Activated naive CD4-positive, alpha-beta T cell treated with anti-CD3 and anti-CD28 coated beads for 36 hours (primary cell): ENCODE measurements at regions of chr15 and their contacts with region 1.

Region 1: DNA sequence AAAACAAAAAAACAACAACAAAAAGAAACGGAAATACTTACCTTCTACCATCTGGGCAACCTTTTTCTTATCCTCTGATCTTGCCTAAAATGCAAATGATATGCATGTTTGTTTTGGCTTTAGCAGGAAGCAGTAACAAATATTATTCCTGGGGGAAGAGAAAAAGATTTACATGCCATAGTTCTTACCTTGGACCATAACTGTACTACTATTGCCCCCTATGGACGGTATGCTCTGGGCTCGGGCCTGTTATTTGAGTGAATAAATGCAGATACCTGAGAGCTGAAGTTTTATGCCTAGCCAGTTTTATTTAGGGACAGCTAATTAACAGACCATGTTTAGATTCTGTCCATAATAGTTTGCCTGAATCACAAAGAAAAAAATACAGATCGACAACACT is 12.6 kb upstream of the STARD5 start:
- DNase-seq: peak; percentile 69
- H3K4me3 Mint-ChIP-seq: no peak overlapping the region
- H3K27ac Mint-ChIP-seq: no peak overlapping the region
- H3K4me1 Mint-ChIP-seq: peaks cover 15% of the 10 kb centered on the region
- H3K27me3 Mint-ChIP-seq: no peaks in the 10 kb centered on the region

Region 2: GRCh38 chr15:81106560-81106959 is 230.0 kb before region 1 on chr15:
- CTCF ChIA-PET with region 1: no interaction called
- intact Hi-C with region 1: loop called (anchors 5 kb)
- DNase-seq: peak; percentile 55
- H3K4me3 Mint-ChIP-seq: no peak overlapping the region
- H3K27ac Mint-ChIP-seq: no peak overlapping the region
- H3K4me1 Mint-ChIP-seq: peaks cover 1% of the 10 kb centered on the region
- H3K27me3 Mint-ChIP-seq: peaks cover 8% of the 10 kb centered on the region

Region 3: GRCh38 chr15:81155375-81156218 is 181.0 kb before region 1 on chr15:
- CTCF ChIA-PET with region 1: interaction called, 3 read pairs
- intact Hi-C with region 1: loop called (anchors 5 kb)
- DNase-seq: peak; percentile 35
- H3K4me3 Mint-ChIP-seq: no peak overlapping the region
- H3K27ac Mint-ChIP-seq: no peak overlapping the region
- H3K4me1 Mint-ChIP-seq: peaks cover under 1% of the 10 kb centered on the region
- H3K27me3 Mint-ChIP-seq: no peaks in the 10 kb centered on the region

Region 4: DNA sequence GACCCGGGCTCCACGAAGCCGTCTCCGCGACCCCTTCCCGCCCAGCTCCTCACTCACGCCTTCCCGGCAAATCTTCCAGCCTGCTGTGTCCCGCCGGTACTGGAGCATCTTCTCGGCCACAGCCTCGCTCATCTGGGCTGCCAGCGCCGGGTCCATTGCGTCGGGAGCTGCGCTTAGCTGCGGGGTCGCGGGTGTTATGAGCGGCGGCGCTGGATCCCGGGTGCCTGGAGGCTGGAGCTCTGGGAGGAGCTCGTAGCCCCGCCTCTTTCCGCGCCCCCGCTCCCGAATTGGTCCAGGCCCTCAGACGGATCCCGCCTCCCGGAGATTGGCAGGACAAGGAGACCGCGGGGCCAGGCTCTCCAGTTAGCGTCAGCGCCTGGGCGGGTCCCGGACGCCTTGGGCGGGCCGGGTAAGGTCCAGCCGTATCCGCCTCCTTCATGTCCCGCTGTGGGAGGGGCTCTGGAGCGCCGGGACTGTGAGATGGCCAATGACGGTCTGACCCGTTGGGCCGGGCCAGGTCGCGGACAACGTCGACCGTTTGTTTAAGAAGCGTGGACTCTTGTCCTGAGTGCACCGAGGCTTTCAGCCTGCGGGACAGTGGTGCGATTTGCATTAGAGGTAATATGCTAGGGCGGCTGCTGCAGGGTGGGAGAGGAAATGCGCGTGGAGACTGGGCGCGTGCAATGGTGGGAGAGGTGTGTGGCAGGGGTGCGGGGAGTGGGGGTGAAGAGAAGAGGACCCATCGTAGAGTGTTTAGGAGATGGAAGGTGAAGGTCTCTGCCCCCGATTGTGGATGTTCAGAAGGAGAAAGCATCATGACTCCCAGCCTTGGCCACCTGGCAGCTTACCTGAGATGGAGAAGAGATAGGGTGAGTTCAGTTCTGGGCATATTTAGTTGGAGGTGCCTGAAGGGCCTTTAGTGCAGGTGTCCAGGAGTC is 12.4 kb before region 1 on chr15 and contains the start of gene STARD5:
- CTCF ChIA-PET with region 1: interaction called, 14 read pairs
- intact Hi-C with region 1: no loop called
- DNase-seq: peak; percentile 98
- H3K4me3 Mint-ChIP-seq: peak within 1 kb of the TSS; percentile 98
- H3K27ac Mint-ChIP-seq: peak within 1 kb of the TSS; percentile 78
- H3K4me1 Mint-ChIP-seq: peaks cover 38% of the 10 kb centered on the region
- H3K27me3 Mint-ChIP-seq: no peaks in the 10 kb centered on the region
- total RNA-seq, gene STARD5: 10.1 to 11.7 TPM

Region 5: GRCh38 chr15:81363718-81364500 is 27.3 kb after region 1 on chr15:
- CTCF ChIA-PET with region 1: no interaction called
- intact Hi-C with region 1: no loop called
- DNase-seq: no peak
- H3K4me3 Mint-ChIP-seq: no peak overlapping the region
- H3K27ac Mint-ChIP-seq: no peak overlapping the region
- H3K4me1 Mint-ChIP-seq: no peaks in the 10 kb centered on the region
- H3K27me3 Mint-ChIP-seq: no peaks in the 10 kb centered on the region

Region 6: GRCh38 chr15:81400640-81401236 is 64.2 kb after region 1 on chr15:
- CTCF ChIA-PET with region 1: interaction called, 4 read pairs
- intact Hi-C with region 1: loop called (anchors 1 kb)
- DNase-seq: no peak
- H3K4me3 Mint-ChIP-seq: no peak overlapping the region
- H3K27ac Mint-ChIP-seq: no peak overlapping the region
- H3K4me1 Mint-ChIP-seq: no peaks in the 10 kb centered on the region
- H3K27me3 Mint-ChIP-seq: no peaks in the 10 kb centered on the region

Region 7: GRCh38 chr15:81529481-81529880 is 192.9 kb after region 1 on chr15:
- CTCF ChIA-PET with region 1: no interaction called
- intact Hi-C with region 1: no loop called
- DNase-seq: no peak
- H3K4me3 Mint-ChIP-seq: no peak overlapping the region
- H3K27ac Mint-ChIP-seq: no peak overlapping the region
- H3K4me1 Mint-ChIP-seq: no peaks in the 10 kb centered on the region
- H3K27me3 Mint-ChIP-seq: peaks cover 8% of the 10 kb centered on the region

Region 8: GRCh38 chr15:81633889-81634288 is 297.3 kb after region 1 on chr15:
- CTCF ChIA-PET with region 1: no interaction called
- intact Hi-C with region 1: no loop called
- DNase-seq: no peak
- H3K4me3 Mint-ChIP-seq: no peak overlapping the region
- H3K27ac Mint-ChIP-seq: no peak overlapping the region
- H3K4me1 Mint-ChIP-seq: no peaks in the 10 kb centered on the region
- H3K27me3 Mint-ChIP-seq: peaks cover 3% of the 10 kb centered on the region